ENCODE measurements at regions of chr4 and their contacts with region 1.

Region 1: DNA sequence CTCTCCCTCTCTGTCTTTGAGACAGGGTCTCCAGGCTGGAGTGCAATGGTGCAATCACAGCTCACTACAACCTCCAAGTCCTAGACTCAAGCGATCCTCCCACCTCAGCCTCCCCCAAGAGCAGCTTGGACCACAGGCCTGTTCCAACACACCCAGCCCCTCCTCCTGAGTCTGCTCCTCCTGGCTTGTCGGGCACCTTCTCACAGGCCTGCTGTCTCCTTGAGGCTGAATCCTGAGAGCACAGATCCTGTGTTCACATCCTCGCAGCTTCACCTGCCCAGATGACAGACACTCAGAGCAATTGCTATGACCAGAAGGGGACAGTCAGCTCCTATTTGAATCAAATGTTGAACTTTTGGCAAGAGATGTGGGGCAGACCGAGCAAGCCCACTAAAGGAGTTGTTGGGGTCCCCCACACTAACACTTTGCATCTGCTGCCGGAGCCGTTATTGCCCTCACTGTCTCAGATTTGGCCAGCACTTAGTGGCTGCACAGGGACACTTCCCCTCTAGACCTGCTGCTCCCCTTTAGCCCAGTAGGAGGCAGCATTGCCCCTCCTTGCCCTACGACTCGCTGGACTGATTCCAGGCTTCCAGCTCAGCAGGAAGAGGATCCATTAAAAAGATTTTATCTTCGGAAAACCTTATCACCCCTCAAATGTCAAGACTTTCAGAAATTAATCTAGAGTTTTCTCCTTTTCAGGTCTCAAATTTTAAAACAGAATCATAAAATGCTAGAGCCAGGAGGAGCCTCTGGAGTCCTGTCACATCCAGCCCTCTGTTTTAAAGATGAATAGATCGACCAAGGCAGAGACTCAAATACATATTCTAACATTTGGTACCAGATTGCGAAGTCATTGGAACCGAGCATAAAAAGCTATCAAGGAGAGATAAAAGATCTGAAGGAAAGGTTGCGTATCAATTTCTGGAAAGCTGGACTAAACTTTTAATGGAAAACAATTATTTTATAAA is 113.7 kb downstream of the USP46 start:
- DNase-seq: peak; percentile 77 to 82 (median 80)
- H3K4me3 ChIP-seq: no peak overlapping the region
- H3K27ac ChIP-seq: no peak overlapping the region
- H3K4me1 ChIP-seq: no peaks in the 10 kb centered on the region
- H3K27me3 ChIP-seq: no peaks in the 10 kb centered on the region
- CTCF ChIP-seq: peak; percentile 97

Region 2: DNA sequence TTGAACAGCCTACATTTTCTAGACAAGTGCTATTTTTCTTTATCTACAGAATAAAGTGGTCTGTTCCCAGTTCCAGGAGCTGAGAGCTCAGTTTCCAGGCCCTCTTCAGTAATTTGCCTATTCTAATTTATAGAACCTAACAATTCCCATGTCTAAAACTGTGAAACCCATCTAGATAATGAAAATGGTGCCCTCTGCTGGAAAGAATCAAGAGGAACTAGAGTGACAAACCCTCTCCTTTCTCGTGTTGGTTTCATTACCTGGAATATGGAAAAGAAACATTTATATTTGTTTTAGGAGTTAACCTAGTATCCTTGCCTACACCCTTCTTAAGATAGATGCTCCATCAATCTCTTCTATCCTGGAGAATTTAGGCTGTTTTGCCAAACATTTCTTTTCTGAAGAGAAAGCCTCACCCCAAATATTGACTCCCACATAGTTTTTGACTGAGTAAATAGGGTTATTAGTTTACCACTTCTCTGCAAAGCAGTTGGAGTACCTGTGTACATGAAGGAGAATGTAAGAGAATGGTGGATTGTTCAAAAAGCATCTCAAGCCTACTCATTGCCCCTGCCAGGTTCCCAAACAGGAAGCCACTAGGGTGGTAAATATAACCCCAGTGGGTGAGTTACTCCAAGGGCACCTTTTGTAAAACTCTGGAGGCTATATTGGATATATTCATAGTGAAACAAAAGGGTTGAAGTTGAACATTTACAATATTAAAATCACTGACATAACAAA is 438.3 kb after region 1 on chr4:
- intact Hi-C with region 1: loop called (anchors 5 kb)
- DNase-seq: peak in 2 of 5 donors; percentile 77 to 83
- H3K4me3 ChIP-seq: no peak overlapping the region
- H3K27ac ChIP-seq: peak overlapping the region in 1 of 2 donors; percentile 2
- H3K4me1 ChIP-seq: peaks cover 5 to 8% (median 5%) of the 10 kb centered on the region in 3 donors
- H3K27me3 ChIP-seq: no peaks in the 10 kb centered on the region
- CTCF ChIP-seq: peak; percentile 68